ENCODE measurements at regions of chr11 and their contacts with region 1.

Region 1: GRCh38 chr11:124070915-124071635 is 29.9 kb upstream of the OR10G7 start:
- DNase-seq: peak; percentile 54
- ATAC-seq: no peak
- H3K4me3 ChIP-seq: no peak overlapping the region
- H3K27ac ChIP-seq: no peak overlapping the region
- H3K4me1 ChIP-seq: 0 out of 2 replicates have a peak, but pooled peaks cover 3% of the 10 kb centered on the region
- H3K27me3 ChIP-seq: peaks cover 8% of the 10 kb centered on the region in 2 experiments; a peak in 3 of 5 replicates
- CTCF ChIP-seq: peak; percentile 72
- EP300 ChIP-seq: no peak
- POLR2A ChIP-seq: no peak
- RAD21 ChIP-seq: peak; percentile 26; the same call in 1 of the 2 replicates

Region 2: GRCh38 chr11:123616505-123617198 is 454.4 kb before region 1 on chr11:
- CTCF ChIA-PET with region 1: no interaction called
- POLR2A ChIA-PET with region 1: no interaction called
- in situ Hi-C with region 1: no loop called
- intact Hi-C with region 1: no loop called
- DNase-seq: no peak
- ATAC-seq: no peak
- H3K4me3 ChIP-seq: no peak overlapping the region
- H3K27ac ChIP-seq: no peak overlapping the region
- H3K4me1 ChIP-seq: no peaks in the 10 kb centered on the region
- H3K27me3 ChIP-seq: no peaks in the 10 kb centered on the region
- CTCF ChIP-seq: no peak
- EP300 ChIP-seq: no peak
- POLR2A ChIP-seq: no peak
- RAD21 ChIP-seq: no peak

Region 3: GRCh38 chr11:124026498-124026897 is 44.6 kb before region 1 on chr11 and contains the start of gene OR10G8:
- CTCF ChIA-PET with region 1: no interaction called
- POLR2A ChIA-PET with region 1: no interaction called
- in situ Hi-C with region 1: no loop called
- intact Hi-C with region 1: no loop called
- DNase-seq: no peak
- ATAC-seq: no peak
- H3K4me3 ChIP-seq: no peak within 1 kb of the TSS
- H3K27ac ChIP-seq: no peak within 1 kb of the TSS
- H3K4me1 ChIP-seq: no peaks in the 10 kb centered on the region
- H3K27me3 ChIP-seq: no peaks in the 10 kb centered on the region
- CTCF ChIP-seq: no peak
- EP300 ChIP-seq: no peak
- POLR2A ChIP-seq: no peak
- RAD21 ChIP-seq: no peak
- total RNA-seq, gene OR10G8: not detected in 2 replicates

Region 4: DNA sequence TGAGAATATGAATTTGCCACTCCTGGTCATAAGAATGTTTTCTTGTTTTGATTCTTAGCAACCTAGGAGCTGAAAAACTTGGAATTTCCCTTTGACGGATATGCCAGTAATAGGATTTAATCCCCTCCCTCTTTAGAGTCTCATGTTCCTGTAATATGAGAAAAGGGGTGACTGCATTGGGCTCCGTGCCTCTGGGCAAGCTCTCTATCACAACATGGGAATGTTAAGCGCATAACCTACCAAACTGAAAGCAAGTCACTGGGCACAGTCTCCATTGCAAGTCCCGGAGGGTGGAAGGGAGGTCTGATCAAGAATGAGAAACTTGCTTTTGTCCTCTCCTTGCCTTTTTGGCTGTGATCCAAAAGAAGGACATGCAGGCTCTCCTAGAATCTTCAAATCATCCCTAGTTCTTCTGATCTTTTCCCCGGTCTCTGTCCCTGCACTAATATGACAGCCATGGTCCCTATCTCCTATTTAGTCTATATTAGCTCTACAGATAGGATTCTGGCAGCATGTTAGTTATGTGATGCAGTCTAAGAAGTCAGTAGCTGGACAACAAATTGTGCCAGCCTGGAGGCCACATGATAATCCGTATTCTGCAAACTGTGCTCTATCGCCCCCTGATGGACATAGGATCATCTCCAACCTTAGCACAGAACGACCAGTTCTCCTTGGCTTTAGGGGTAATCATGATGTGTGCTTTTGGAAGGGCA is 123.8 kb after region 1 on chr11:
- CTCF ChIA-PET with region 1: interaction called, 38 read pairs
- POLR2A ChIA-PET with region 1: no interaction called
- in situ Hi-C with region 1: loop called (anchors 5 kb)
- intact Hi-C with region 1: loop called (anchors 1 kb)
- DNase-seq: peak; percentile 50
- ATAC-seq: peak; percentile 94
- H3K4me3 ChIP-seq: no peak overlapping the region
- H3K27ac ChIP-seq: no peak overlapping the region
- H3K4me1 ChIP-seq: no peaks in the 10 kb centered on the region
- H3K27me3 ChIP-seq: no peaks in the 10 kb centered on the region
- CTCF ChIP-seq: peak; percentile 84
- EP300 ChIP-seq: no peak
- POLR2A ChIP-seq: no peak
- RAD21 ChIP-seq: no peak

Measured in HepG2 (cell line).